Activated CD4-positive, alpha-beta memory T cell treated with anti-CD3 and anti-CD28 coated beads, Interleukin-2, amount 10 ng/mL, durations not matched to agents 7 days and 5 days (primary cell): ENCODE measurements at regions of chr16 and their contacts with region 1.

Region 1: DNA sequence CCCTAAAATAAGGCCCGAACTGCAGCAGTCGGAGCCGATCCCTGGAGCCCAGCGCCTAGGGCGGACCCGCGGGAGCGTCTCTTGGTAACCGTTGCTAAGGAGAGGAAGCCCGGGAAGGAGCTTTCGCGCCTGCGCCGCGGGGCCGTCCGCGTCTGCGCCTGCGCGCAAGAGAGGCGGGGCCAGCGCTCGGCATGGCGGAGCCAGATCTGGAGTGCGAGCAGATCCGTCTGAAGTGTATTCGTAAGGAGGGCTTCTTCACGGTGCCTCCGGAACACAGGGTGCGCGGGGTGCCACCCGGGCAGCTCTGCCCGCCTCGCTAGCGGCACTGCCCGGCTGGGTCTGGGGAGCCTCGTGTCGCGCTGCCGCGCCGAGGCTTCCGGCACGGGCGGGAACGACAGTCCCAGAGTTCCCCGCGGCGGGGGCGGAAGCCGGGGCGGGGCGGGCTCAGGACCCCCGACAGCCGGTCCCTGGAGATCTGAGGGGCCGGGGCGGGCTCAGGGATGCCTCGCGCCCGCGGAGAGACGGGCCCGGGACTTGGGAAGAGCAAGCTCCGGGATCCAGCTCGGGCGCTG is at the start of gene CDK10:
- DNase-seq: peak; percentile 92
- H3K4me3 Mint-ChIP-seq: peak within 1 kb of the TSS; percentile 91
- H3K27ac Mint-ChIP-seq: peak within 1 kb of the TSS; percentile 85
- H3K4me1 Mint-ChIP-seq: peaks cover 18% of the 10 kb centered on the region
- H3K27me3 Mint-ChIP-seq: no peaks in the 10 kb centered on the region
- total RNA-seq, gene CDK10: 73.2 to 74.0 TPM

Region 2: GRCh38 chr16:89657442-89658220 is 29.0 kb before region 1 on chr16 and contains the starts of genes CHMP1A and SPATA33:
- CTCF ChIA-PET with region 1: no interaction called
- POLR2A ChIA-PET with region 1: interaction called, 16 read pairs
- DNase-seq: peak; percentile 93
- H3K4me3 Mint-ChIP-seq: peak within 1 kb of the TSS; percentile 90
- H3K27ac Mint-ChIP-seq: peak within 1 kb of the TSS; percentile 78
- H3K4me1 Mint-ChIP-seq: peaks cover 49% of the 10 kb centered on the region
- H3K27me3 Mint-ChIP-seq: no peaks in the 10 kb centered on the region
- total RNA-seq, gene CHMP1A: 93.8 to 102 TPM
- total RNA-seq, gene SPATA33: 8.1 to 9.2 TPM

Region 3: GRCh38 chr16:89855421-89855871 is 168.8 kb after region 1 on chr16:
- CTCF ChIA-PET with region 1: no interaction called
- POLR2A ChIA-PET with region 1: no interaction called
- DNase-seq: no peak
- H3K4me3 Mint-ChIP-seq: no peak overlapping the region
- H3K27ac Mint-ChIP-seq: no peak overlapping the region
- H3K4me1 Mint-ChIP-seq: no peaks in the 10 kb centered on the region
- H3K27me3 Mint-ChIP-seq: no peaks in the 10 kb centered on the region